ENCODE measurements at regions of chr11 and their contacts with region 1.

Region 1: DNA sequence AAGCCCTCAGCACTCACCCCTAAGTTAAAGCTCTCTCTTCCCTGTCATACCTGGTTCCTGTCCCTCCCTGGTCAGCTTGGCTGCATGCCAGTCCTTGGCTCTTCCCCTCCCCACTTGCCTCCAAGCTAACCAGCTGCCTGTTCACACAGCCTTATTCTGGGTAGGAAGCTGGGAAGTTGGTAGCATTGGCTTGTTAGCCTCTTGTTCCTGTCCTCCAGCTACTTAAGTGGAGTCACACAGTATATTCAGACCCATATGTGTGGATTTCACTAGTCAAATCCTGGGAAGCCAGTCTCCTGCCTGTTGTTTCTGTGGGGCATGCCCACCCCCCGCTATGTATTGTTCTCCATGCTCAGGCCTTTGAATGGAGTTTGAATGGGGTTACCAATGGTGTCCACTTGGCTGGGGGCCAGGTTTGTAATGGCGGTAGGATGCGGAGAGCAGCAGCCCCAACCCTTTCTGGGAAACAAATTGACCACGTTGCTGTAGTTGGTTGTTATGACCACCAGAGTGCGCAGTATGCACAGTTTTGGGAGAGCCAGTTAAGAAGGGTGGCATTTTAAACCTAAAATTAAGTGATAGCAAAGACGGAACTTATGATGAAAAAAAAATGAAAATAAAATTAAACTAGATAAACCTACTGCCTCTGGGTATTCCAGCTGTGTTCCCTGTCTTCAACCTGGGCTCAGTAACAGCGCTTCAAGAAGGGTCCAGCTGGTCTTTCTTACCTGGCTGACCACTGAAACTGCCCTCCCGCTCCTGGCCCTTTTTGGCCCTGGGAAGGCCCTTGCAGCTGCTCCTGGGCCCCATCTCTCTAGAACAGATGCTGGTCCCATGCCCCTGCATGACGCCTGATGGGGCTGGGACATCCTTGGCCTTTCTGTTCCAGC is 10.7 kb upstream of the RPS3 start:
- DNase-seq: peak; percentile 92

Region 2: DNA sequence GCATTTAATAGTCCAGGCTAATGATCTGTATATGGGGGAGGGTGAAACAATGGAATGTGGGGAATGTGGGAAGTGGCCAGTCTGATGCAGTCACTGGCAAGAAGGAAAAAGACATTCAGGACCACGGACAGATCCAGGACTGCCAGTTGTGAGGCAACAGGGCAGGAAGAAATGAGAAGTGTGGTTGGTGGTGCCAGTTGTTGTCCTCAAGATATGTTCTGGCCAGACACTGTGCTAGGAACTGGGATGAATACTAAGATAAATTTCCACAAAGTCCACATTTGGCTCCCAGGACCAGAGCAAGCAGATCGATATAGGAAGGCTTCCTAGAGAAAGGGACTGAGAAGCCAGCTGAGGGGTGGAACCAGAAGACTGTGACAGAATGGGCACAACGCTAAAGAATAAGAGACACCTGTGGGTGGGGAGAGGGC is 154.9 kb before region 1 on chr11:
- in situ Hi-C with region 1: no loop called
- DNase-seq: peak; percentile 65

Region 3: DNA sequence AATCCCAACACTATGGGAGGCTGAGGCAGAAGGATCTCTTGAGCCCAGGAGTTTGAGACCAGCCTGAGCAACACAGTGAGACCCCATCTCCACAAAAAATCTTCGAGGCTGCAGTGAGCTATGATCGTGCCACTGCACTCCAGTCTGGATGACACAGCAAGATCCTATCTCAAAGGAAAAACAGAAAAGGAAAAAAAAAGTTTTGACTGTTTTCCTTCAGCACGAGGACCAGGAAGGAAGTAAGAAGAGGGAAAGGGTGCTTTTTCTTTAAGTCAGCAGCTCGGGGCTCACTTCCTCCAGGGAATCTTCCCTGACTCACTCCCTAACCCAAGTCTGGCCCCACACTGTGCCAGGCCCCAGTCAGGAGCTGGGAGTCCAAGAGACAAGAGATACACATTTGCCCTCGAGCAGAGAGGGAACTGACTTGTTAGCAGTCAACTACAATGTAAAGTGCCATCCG is 51.4 kb before region 1 on chr11:
- in situ Hi-C with region 1: loop called (anchors 10 kb)
- DNase-seq: no peak

Region 4: GRCh38 chr11:75468534-75469340 is 80.1 kb after region 1 on chr11:
- in situ Hi-C with region 1: no loop called
- DNase-seq: no peak

Region 5: GRCh38 chr11:75717608-75718418 is 329.2 kb after region 1 on chr11 and contains the start of gene MOGAT2:
- in situ Hi-C with region 1: no loop called
- DNase-seq: no peak